MCF 10A (cell line): ENCODE measurements at regions of chr9 and their contacts with region 1.

Region 1: GRCh38 chr9:35732122-35732799 is at the starts of genes CREB3 and TLN1:
- DNase-seq: peak; percentile 99
- H3K4me3 Mint-ChIP-seq: no peak within 1 kb of the TSS
- H3K27ac Mint-ChIP-seq: no peak within 1 kb of the TSS
- H3K4me1 Mint-ChIP-seq: peaks cover 14% of the 10 kb centered on the region
- H3K27me3 Mint-ChIP-seq: no peaks in the 10 kb centered on the region
- CTCF ChIP-seq: no peak
- total RNA-seq, gene CREB3: 58.7 and 66.2 TPM in 2 replicates
- total RNA-seq, gene TLN1: 224 and 256 TPM in 2 replicates

Region 2: DNA sequence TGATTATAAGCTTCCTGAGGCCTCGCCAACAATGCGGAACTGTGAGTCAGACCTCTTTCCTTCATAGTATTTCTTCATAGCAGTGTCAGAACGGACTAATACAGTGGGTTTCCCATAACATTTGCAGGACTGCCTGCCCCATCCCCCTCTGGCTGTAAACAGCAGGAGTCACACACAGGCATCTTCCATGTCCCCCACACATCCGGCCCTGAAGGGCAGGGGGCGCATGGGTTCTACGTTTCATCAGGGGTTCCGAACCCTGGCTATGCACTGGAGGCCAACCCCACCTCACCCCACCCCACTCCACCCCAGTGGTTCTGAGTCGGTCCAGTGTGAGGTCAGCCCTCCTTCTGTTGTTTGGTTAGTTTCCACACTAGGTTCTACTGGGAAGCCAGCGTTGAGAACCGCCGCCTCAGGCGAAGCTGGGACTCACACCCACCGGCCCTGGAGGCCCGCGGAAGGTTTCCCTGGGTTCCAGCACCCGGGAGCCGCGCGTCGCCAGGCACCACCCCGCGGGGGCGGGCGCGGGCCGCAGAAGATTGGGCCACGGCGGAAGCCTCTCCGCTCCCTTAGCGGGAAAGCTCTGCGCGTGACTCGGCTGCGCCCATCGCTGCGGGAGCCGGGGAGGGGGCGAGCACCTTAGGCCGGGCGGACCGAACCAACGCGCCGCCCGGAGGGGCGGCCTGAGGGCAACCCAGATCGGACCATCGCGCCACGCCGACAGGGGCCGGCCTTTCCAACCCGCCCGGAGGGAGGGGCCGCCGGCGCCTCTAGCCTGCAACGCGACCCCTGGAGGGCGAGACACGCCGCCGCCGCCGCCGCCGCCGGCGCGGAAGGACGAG is 242.7 kb before region 1 on chr9 and contains the start of gene RUSC2:
- CTCF ChIA-PET with region 1: no interaction called
- POLR2A ChIA-PET with region 1: interaction called, 3 read pairs
- intact Hi-C with region 1: loop called (anchors 2 kb)
- DNase-seq: peak; percentile 85
- H3K4me3 Mint-ChIP-seq: peak within 1 kb of the TSS; percentile 93
- H3K27ac Mint-ChIP-seq: peak within 1 kb of the TSS; percentile 97
- H3K4me1 Mint-ChIP-seq: peaks cover 23% of the 10 kb centered on the region
- H3K27me3 Mint-ChIP-seq: no peaks in the 10 kb centered on the region
- CTCF ChIP-seq: peak; percentile 20
- total RNA-seq, gene RUSC2: 27.8 and 30.5 TPM in 2 replicates

Region 3: GRCh38 chr9:35616681-35617459 is 115.4 kb before region 1 on chr9:
- CTCF ChIA-PET with region 1: no interaction called
- POLR2A ChIA-PET with region 1: no interaction called
- intact Hi-C with region 1: no loop called
- DNase-seq: peak; percentile 3
- H3K4me3 Mint-ChIP-seq: peak overlapping the region; percentile 15
- H3K27ac Mint-ChIP-seq: no peak overlapping the region
- H3K4me1 Mint-ChIP-seq: no peaks in the 10 kb centered on the region
- H3K27me3 Mint-ChIP-seq: peaks cover 48% of the 10 kb centered on the region
- CTCF ChIP-seq: no peak

Region 4: DNA sequence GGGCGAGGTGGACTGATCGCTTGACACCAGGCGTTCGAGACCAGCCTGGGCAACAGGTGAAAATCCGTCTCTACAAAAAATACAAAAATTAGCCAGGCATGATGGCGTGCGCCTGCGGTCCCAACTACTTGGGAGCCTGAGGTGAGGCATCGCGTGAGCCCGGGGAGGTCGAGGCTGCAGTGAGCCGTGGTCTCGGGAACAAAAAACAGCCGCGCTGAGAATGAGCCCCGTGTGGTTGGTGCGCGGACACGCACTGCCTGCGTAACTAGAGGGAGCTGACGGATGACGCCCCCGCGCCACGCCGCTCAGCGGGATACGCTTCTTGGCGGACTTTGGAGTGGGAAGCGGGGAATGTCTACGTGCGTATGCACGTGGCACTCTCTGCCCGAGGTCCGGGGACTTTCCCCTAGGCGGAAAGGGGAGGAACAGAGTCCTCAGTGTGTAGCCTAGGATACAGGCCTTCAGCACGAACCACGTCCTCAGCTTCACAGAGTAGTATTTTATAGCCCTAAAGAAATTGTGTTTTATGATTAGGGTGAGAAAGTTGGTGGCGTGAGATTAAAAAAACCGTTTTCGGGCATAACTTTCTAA is 74.6 kb before region 1 on chr9 and contains the start of gene RMRP:
- CTCF ChIA-PET with region 1: interaction called, 119 read pairs
- POLR2A ChIA-PET with region 1: interaction called, 59 read pairs
- intact Hi-C with region 1: loop called (anchors 2 kb)
- DNase-seq: peak; percentile 99
- H3K4me3 Mint-ChIP-seq: peak within 1 kb of the TSS; percentile 62
- H3K27ac Mint-ChIP-seq: peak within 1 kb of the TSS; percentile 100
- H3K4me1 Mint-ChIP-seq: peaks cover 21% of the 10 kb centered on the region
- H3K27me3 Mint-ChIP-seq: no peaks in the 10 kb centered on the region
- CTCF ChIP-seq: no peak
- total RNA-seq, gene RMRP: 13,245 and 17,503 TPM in 2 replicates

Region 5: GRCh38 chr9:35696525-35697215 is 35.6 kb before region 1 on chr9:
- CTCF ChIA-PET with region 1: interaction called, 136 read pairs
- POLR2A ChIA-PET with region 1: interaction called, 35 read pairs
- intact Hi-C with region 1: loop called (anchors 2 kb)
- DNase-seq: peak; percentile 68
- H3K4me3 Mint-ChIP-seq: no peak overlapping the region
- H3K27ac Mint-ChIP-seq: no peak overlapping the region
- H3K4me1 Mint-ChIP-seq: no peaks in the 10 kb centered on the region
- H3K27me3 Mint-ChIP-seq: no peaks in the 10 kb centered on the region
- CTCF ChIP-seq: peak; percentile 72

Region 6: DNA sequence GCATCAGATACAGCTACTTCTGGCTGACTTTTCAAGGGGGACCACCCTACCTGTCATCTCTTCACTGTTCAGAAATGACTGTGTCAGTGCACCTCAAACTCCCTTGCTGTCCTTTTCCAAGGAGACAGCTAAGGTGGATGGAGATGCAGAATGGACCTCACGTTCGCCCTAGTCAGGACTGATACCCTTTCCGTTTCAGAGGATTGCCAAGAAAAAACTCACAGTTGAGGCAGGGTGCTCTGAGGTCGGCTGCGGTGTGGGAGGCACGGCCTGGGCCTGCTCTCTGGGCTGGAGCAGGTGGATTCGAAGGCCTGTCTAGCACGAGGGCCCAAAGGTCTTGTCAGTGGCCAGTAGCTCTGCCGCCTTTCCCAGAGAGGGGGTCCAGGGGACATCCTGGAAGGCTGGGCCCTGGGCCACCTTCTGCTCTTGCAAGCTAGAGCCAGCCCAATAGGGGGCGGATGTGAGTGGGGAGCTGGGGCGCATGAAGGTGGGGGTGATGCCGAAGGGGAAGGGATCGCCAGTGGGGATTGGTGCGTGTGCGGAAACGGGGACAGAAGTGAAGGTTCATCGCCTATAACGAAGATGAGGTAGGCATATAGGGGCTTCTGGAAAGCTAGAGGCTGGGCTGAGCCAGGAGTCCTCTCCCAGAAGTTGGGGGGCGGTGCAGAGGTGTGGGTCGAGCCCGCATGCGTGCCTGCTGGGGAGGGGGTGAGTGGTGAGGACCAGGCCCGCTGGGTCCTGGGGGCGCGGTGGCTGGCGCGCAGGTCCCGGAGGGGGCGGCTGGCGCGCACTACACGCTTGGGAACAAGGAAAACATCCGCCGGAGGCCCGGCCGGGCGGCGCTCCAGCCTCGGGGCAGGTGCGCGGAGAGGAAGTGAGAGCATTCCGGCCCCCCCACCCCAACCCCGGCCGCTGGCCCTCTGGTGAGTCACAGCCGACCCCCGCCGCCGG is 24.3 kb after region 1 on chr9:
- CTCF ChIA-PET with region 1: interaction called, 6 read pairs
- POLR2A ChIA-PET with region 1: interaction called, 14 read pairs
- intact Hi-C with region 1: loop called (anchors 2 kb)
- DNase-seq: peak; percentile 70
- H3K4me3 Mint-ChIP-seq: peak overlapping the region; percentile 97
- H3K27ac Mint-ChIP-seq: peak overlapping the region; percentile 98
- H3K4me1 Mint-ChIP-seq: peaks cover 20% of the 10 kb centered on the region
- H3K27me3 Mint-ChIP-seq: no peaks in the 10 kb centered on the region
- CTCF ChIP-seq: peak; percentile 61

Region 7: DNA sequence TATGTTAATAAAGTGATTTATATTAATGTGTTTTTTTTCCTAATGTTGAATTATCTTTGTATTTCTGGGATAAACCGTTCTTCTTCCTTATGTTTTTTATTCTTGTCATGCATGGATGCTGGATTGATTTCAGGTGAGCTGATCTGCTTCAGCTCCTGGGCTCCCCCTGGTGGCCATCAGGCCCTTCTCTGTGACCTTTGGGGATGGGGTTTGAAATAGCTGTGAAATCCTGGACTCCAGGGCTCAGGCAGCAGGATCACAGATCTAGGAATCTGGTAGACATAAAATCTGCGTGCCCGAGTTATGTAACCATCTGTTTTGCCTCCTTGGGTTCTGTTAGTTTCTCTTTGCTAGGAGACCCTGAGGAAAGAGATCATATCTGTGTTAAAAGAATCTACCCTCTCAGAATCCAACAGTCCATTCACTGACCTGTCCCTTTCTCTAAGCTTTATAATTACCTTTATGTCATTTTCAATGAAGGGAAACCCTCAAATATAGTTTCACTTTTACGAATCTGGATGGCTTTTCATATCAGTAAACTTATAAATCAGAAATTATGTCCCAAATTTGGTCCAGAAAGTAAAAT is 150.1 kb after region 1 on chr9:
- CTCF ChIA-PET with region 1: interaction called, 3 read pairs
- POLR2A ChIA-PET with region 1: interaction called, 3 read pairs
- intact Hi-C with region 1: loop called (anchors 1 kb)
- DNase-seq: peak; percentile 80
- H3K4me3 Mint-ChIP-seq: no peak overlapping the region
- H3K27ac Mint-ChIP-seq: no peak overlapping the region
- H3K4me1 Mint-ChIP-seq: peaks cover 6% of the 10 kb centered on the region
- H3K27me3 Mint-ChIP-seq: peaks cover 16% of the 10 kb centered on the region
- CTCF ChIP-seq: peak; percentile 95